Cardiac septum (tissue), 1 donor: ENCODE measurements at regions of chr2 and their contacts with region 1.

Region 1: DNA sequence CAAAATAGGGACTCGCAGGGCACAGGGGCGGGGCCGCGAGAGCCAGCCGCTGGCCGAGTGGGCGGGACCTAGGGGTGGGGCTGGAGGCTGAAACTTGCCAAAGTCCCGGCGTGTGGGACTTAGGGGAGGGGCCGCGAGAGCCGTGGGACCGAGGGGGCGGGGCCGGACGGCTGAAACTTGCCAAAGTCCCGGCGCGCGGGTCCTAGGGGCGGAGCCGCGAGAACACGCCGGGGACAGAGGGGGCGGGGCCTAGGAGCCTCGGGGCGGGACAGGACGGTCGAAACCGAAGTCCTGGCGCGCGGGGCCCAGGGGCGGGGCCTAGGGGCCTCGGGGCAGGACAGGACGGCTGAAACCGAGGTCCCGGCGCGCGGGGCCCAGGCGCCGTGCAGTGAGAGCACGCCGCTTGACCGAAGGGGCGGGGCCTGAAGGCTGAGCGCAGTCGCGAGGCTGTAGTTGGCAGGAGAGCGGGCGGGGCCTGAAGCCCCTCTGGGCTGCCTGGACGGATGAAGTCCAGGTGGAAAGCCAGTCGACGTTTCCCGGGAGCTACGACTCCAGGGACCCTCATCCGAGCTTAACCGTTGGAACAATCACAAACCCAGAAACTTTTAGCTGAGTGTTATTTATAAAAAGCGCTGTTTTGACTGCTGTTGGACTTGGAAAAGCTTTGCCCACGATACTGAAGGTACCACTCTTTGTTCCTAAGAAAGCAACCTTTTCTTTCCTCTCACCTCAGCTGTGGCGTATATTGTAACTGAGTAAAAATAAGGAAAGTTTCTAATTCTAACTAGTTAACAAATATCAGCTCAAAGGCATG is 475 bp upstream of the BARD1 start:
- DNase-seq: peak; percentile 100

Region 2: DNA sequence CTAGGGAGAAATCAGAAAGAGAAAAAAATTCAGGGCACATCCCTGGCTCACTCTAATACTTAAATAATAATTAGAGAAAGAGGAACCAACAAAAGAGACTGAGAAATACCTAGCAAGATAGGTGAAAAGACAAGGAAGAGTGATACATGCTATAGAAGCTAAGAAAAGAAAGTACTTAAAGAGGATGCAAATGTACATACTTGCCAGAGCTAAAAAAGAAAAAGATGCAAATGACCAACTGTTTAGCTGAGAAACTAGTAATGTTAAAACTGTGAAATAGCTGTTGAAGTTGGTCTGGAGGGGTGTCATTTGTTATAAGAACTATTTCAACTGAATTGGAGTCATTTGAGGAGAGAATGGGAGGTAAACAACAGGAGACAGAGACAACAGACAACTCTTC is 1113.5 kb before region 1 on chr2:
- intact Hi-C with region 1: no loop called
- DNase-seq: no peak

Region 3: DNA sequence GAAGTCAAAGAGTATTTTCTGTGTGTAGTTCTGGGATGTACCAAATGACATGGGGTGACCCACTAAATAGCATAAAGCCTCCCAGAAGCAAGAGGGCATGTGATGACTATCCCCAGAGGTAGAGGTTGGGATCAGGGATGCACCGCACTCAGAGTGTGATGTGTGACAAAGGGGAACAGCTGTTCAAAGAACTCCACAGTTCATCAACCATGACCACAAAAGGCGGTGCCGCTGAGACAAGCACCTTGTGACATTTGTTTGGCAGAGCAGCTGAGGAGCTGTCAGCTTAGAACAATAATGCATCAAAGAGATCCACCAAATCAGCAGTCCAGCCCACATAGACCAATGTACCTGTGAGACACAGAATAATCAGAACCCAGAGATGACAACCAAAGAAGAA is 317.8 kb before region 1 on chr2:
- intact Hi-C with region 1: loop called (anchors 10 kb)
- DNase-seq: no peak